A673 (cell line): ENCODE measurements at regions of chr1 and their contacts with region 1.

Region 1: GRCh38 chr1:20430355-20431175 is 55.4 kb downstream of the CAMK2N1 start:
- DNase-seq: peak; percentile 53
- H3K4me3 ChIP-seq: no peak overlapping the region
- H3K27ac ChIP-seq: no peak overlapping the region
- H3K4me1 ChIP-seq: no peaks in the 10 kb centered on the region
- H3K27me3 ChIP-seq: no peaks in the 10 kb centered on the region
- CTCF ChIP-seq: peak; percentile 93

Region 2: DNA sequence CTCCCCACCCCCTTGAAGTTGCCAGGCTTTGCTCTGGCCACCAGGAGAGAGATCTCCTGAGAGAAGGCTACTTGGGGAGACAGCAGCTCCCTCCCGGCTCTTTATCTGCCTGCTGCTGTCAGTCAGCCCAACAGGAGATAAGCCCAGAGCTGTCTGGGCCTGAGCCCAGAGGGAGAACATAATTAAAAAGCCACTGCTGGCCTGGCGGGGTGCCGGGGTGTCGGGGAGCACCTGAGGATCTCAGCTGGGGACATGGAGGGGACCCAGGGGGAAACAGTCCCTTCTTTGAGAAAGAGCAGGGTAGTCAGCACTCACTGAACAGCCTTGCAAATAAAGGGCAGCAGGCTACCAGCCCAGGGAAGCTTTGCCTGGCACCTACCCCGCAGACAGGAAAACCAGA is 122.0 kb before region 1 on chr1:
- CTCF ChIA-PET with region 1: no interaction called
- POLR2A ChIA-PET with region 1: no interaction called
- intact Hi-C with region 1: no loop called
- DNase-seq: no peak
- H3K4me3 ChIP-seq: no peak overlapping the region
- H3K27ac ChIP-seq: no peak overlapping the region
- H3K4me1 ChIP-seq: no peaks in the 10 kb centered on the region
- H3K27me3 ChIP-seq: peaks cover 10% of the 10 kb centered on the region
- CTCF ChIP-seq: no peak

Region 3: DNA sequence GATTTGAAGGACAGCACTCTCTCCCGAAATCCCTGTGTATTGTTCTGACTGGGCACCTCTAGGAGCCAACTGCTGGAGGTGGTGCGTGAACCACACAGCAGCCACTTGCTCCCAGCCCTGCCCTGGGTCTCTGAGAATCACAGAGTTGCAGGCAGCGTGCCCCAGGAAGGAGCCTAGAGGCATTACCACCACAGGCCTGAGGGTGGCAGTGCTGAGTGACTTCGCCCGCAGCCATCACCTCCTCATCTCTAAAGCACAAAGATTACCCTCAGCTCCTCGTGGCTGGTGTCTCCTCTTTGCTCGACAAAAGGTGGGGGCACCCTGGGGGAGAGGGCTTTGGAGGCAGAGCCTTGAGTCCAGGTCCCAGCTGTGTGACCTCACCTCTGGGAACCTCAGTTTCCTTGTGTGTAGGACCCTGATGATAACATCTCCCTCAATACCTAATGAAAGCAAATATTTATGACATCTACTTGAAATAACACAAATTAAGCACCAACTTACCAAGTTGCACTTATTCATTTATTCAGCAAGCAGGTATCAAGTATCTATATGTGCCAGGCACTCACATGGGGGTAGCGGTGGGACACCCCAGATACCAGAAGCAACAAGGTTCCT is 53.6 kb before region 1 on chr1:
- CTCF ChIA-PET with region 1: no interaction called
- POLR2A ChIA-PET with region 1: no interaction called
- intact Hi-C with region 1: loop called (anchors 5 kb)
- DNase-seq: peak; percentile 45
- H3K4me3 ChIP-seq: no peak overlapping the region
- H3K27ac ChIP-seq: no peak overlapping the region
- H3K4me1 ChIP-seq: no peaks in the 10 kb centered on the region
- H3K27me3 ChIP-seq: peaks cover 49% of the 10 kb centered on the region
- CTCF ChIP-seq: peak; percentile 81